ENCODE measurements at regions of chr2 and their contacts with region 1.

Region 1: DNA sequence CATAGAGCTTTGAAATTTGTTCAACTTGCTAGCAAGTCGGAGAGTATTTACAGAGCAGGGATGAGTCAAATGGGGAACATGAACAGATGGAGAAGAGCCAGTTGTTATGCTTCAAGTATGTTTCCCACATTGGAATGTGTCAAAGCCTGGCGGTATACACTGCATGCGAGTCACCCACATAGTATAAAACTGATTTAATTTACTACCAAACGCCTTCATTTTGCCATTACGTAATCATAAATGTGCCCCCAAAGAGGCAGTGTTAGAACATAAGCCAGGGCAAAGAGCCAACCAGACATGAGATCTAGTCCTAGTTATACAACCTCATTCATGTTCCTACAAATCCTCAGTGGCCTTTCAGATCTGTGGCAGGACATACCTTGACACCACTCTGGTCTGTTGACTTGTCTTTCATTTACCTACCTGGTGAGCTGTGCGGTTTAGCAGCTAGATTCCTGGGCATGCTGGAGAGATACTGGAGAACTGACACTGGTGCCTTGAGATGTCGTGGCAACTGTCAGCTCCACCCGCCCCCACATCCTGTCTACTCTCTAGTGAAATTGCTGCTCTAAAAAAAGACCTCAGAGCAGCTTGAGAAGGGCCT is 21.7 kb upstream of the NRP2 start:
- DNase-seq: peak; percentile 84
- H3K4me3 Mint-ChIP-seq: peak overlapping the region; percentile 50
- H3K27ac Mint-ChIP-seq: peak overlapping the region; percentile 73
- H3K4me1 Mint-ChIP-seq: peaks cover 28% of the 10 kb centered on the region
- H3K27me3 Mint-ChIP-seq: peaks cover 4% of the 10 kb centered on the region

Region 2: GRCh38 chr2:205636549-205637319 is 23.9 kb before region 1 on chr2:
- intact Hi-C with region 1: loop called (anchors 2 kb)
- DNase-seq: peak; percentile 61
- H3K4me3 Mint-ChIP-seq: no peak overlapping the region
- H3K27ac Mint-ChIP-seq: peak overlapping the region; percentile 79
- H3K4me1 Mint-ChIP-seq: peaks cover 24% of the 10 kb centered on the region
- H3K27me3 Mint-ChIP-seq: no peaks in the 10 kb centered on the region

Region 3: DNA sequence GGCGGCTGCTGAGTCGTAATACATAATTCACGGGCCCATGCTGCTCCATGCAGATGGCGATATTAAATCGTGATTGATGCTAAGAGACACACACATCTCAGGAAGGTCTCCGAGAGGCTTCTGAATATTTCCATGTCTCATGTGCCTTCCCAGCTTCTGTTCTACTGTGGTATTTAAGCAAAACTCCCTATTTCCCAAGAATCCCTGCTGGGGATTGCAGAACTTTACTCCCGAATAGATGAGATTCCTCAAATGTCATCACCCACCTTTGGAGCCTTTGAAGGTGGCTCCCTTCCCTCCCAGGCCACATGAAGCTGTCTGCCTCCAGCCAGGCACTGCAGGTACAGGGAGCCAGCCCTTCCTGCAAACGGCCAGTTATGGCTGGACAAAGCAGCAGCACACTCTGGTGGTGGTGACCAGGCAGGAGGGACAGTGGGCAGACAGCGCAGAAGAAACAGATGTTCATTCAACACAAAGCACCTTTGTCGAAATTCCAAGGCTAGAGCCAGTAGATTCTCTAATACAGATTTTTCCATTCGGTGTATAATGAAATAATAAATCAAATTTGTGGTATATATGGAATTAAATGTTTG is 35.8 kb after region 1 on chr2:
- intact Hi-C with region 1: no loop called
- DNase-seq: no peak
- H3K4me3 Mint-ChIP-seq: no peak overlapping the region
- H3K27ac Mint-ChIP-seq: no peak overlapping the region
- H3K4me1 Mint-ChIP-seq: peaks cover 41% of the 10 kb centered on the region
- H3K27me3 Mint-ChIP-seq: peaks cover 2% of the 10 kb centered on the region

Region 4: DNA sequence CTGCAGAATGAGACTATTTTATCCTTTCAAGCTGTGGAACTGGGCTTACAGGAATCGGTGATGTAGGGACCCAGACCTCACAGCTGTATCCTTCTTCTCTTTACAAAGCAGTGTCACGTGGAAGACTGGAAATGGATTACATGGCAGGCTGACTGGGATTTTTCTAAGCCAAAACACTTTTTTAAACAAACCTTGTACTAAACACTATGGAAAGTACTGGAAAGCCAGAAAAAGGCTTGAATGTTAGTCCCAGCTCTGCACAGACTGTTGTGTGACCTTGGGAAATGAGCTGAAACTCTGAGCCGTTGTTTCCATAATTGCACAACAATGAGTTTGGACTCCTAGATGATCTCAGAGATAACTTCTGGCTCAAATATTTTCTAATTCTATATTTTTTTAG is 775.1 kb after region 1 on chr2:
- intact Hi-C with region 1: no loop called
- DNase-seq: no peak
- H3K4me3 Mint-ChIP-seq: no peak overlapping the region
- H3K27ac Mint-ChIP-seq: no peak overlapping the region
- H3K4me1 Mint-ChIP-seq: no peaks in the 10 kb centered on the region
- H3K27me3 Mint-ChIP-seq: peaks cover 37% of the 10 kb centered on the region

Measured in activated CD4-positive, alpha-beta T cell treated with anti-CD3 and anti-CD28 coated beads, Interleukin-2, amount 10 ng/mL, durations not matched to agents 24 days and 14 days (primary cell).